Caco-2 (cell line): ENCODE measurements at regions of chr17 and their contacts with region 1.

Region 1: GRCh38 chr17:17028059-17028877 is 14.0 kb upstream of the MPRIP start:
- DNase-seq: peak; percentile 99 to 100
- H3K4me3 ChIP-seq: peak overlapping the region; percentile 24
- H3K4me3 Mint-ChIP-seq: peak overlapping the region; percentile 69
- H3K27ac Mint-ChIP-seq: peak overlapping the region; percentile 99
- H3K4me1 ChIP-seq: peaks cover 49% of the 10 kb centered on the region
- H3K4me1 Mint-ChIP-seq: peaks cover 53% of the 10 kb centered on the region
- H3K27me3 ChIP-seq: no peaks in the 10 kb centered on the region
- H3K27me3 Mint-ChIP-seq: no peaks in the 10 kb centered on the region
- CTCF ChIP-seq: peak in 1 of 2 experiments; percentile 46

Region 2: DNA sequence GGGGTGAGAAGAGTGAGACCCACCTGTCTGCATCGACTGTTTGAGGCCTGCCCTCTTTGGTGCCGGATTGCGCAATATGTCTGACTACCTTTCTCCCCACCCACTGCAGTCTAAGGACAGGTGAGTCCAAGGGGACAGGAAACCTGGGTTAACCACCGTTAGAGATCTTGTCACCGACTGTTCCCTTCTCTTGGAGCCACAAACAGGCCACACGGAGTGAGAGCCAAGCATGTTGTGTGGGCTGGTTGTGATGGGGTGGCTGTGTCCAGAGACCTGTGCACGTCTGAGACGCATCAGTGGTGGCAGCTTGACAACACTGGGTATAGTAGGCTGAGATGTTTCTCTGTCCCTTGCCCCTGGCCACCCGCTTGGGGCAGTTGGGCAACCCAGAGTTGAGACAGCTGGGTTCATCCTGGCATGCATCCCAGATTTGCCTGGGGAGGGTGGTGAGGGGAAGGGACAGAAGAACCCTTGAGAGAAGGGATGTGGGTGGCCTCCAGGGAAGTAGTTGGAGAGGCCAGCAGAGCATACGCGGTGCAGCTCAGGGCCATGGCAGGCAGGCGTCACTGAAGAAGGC is 35.4 kb after region 1 on chr17:
- CTCF ChIA-PET with region 1: no interaction called
- POLR2A ChIA-PET with region 1: interaction called, 12 read pairs
- intact Hi-C with region 1: loop called (anchors 1 kb)
- DNase-seq: no peak
- H3K4me3 ChIP-seq: no peak overlapping the region
- H3K4me3 Mint-ChIP-seq: no peak overlapping the region
- H3K27ac Mint-ChIP-seq: peak overlapping the region; percentile 51
- H3K4me1 ChIP-seq: peaks cover 19% of the 10 kb centered on the region
- H3K4me1 Mint-ChIP-seq: peaks cover 24% of the 10 kb centered on the region
- H3K27me3 ChIP-seq: no peaks in the 10 kb centered on the region
- H3K27me3 Mint-ChIP-seq: no peaks in the 10 kb centered on the region
- CTCF ChIP-seq: no peak

Region 3: DNA sequence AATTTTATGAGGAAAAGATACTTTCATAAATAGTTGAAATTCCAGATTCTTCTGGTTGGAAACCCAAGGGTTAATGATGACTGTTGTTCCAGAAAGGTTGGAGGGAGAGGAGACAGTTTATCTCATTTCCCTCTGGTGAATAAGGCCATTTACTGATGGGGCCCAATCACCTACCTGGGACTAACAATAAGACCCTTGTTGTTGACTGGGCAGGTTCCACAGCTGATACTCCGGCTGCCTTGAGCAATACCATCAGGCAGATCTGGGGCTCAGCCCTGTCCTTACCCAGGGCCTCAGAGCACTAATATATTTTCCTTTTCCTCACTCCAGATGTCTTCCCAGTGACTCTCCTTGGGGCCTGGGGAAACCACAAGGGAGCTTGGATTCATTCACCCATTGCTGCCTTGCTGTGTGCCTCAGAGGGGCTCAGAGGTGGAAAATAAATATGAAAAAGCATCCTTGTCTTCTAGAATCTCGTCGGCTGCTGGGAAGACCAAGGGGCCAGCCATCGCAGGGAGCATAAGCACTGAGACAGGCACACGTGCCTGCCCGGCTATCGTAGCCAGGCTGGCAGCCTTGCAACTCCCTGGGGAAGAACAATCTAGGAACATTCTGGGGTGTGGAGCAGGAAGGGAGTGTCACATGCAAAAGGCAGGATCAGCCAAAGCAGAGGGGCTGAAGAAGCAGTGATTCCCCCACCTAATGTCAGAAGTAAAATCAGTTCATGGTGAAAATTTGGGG is 68.3 kb after region 1 on chr17:
- CTCF ChIA-PET with region 1: no interaction called
- POLR2A ChIA-PET with region 1: no interaction called
- intact Hi-C with region 1: no loop called
- DNase-seq: peak; percentile 47 to 74
- H3K4me3 ChIP-seq: no peak overlapping the region
- H3K4me3 Mint-ChIP-seq: no peak overlapping the region
- H3K27ac Mint-ChIP-seq: peak overlapping the region; percentile 82
- H3K4me1 ChIP-seq: peaks cover 19% of the 10 kb centered on the region
- H3K4me1 Mint-ChIP-seq: peaks cover 17% of the 10 kb centered on the region
- H3K27me3 ChIP-seq: no peaks in the 10 kb centered on the region
- H3K27me3 Mint-ChIP-seq: no peaks in the 10 kb centered on the region
- CTCF ChIP-seq: no peak